CD4-positive, alpha-beta T cell (primary cell): ENCODE measurements at regions of chrX and their contacts with region 1.

Region 1: DNA sequence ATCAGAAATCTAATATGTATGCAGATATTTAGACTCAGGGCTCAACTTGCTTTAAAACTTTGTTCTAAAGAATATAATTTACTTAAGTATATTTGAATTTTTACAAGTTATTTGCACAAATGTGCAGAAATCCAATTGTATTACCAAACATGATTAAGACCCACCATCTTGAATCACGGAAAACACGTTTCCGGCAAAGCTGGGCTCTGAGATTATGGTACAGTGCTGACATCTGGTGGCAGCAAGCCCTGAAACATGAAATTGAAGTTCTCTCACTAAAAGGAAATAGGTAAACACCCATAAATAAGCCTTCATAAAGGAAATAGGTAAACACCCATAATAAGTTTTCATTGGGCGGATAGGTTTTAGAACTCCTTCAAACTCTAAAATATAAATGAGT is 98.3 kb upstream of the MAOA start:
- DNase-seq: peak; percentile 19 to 77 (median 48)
- ATAC-seq: peak; percentile 39
- H3K4me3 ChIP-seq: no peak overlapping the region
- H3K4me3 Mint-ChIP-seq: no peak overlapping the region
- H3K27ac ChIP-seq: no peak overlapping the region
- H3K27ac Mint-ChIP-seq: no peak overlapping the region
- H3K4me1 ChIP-seq: no peaks in the 10 kb centered on the region
- H3K4me1 Mint-ChIP-seq: no peaks in the 10 kb centered on the region
- H3K27me3 ChIP-seq: no peaks in the 10 kb centered on the region
- H3K27me3 Mint-ChIP-seq: no peaks in the 10 kb centered on the region
- CTCF ChIP-seq: peak; percentile 56

Region 2: DNA sequence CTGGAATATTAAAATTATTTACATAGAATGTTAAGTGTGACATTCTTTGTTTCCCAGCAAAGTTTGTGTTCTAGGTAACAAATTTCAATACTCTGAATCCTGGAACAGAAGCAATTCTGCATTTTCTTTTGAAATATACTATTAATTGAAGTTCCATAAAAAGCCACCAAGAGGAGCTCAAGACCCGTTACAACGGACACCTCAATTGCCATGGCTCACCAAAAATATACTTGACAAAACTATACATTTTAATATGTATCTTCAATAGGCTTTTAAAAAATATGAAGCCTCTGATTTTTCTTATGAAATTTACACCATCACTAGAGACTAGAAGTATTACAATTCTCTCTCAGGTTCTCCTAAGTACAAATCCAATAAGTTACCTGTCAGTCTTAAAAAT is 1999.3 kb before region 1 on chrX:
- CTCF ChIA-PET with region 1: no interaction called
- POLR2A ChIA-PET with region 1: no interaction called
- intact Hi-C with region 1: loop called (anchors 5 to 10 kb)
- DNase-seq: peak in 4 of 14 experiments; percentile 7 to 45 (median 38)
- ATAC-seq: no peak
- H3K4me3 ChIP-seq: no peak overlapping the region
- H3K4me3 Mint-ChIP-seq: no peak overlapping the region
- H3K27ac ChIP-seq: no peak overlapping the region
- H3K27ac Mint-ChIP-seq: peak overlapping the region; percentile 83
- H3K4me1 ChIP-seq: peaks cover 22% of the 10 kb centered on the region
- H3K4me1 Mint-ChIP-seq: peaks cover 41% of the 10 kb centered on the region
- H3K27me3 ChIP-seq: no peaks in the 10 kb centered on the region
- H3K27me3 Mint-ChIP-seq: no peaks in the 10 kb centered on the region
- CTCF ChIP-seq: peak; percentile 36

Region 3: GRCh38 chrX:41589634-41590270 is 1968.0 kb before region 1 on chrX:
- CTCF ChIA-PET with region 1: no interaction called
- POLR2A ChIA-PET with region 1: no interaction called
- intact Hi-C with region 1: loop called in 1 of 2 experiments (anchors 10 kb)
- DNase-seq: no peak
- ATAC-seq: no peak
- H3K4me3 ChIP-seq: no peak overlapping the region
- H3K4me3 Mint-ChIP-seq: no peak overlapping the region
- H3K27ac ChIP-seq: no peak overlapping the region
- H3K27ac Mint-ChIP-seq: no peak overlapping the region
- H3K4me1 ChIP-seq: no peaks in the 10 kb centered on the region
- H3K4me1 Mint-ChIP-seq: no peaks in the 10 kb centered on the region
- H3K27me3 ChIP-seq: no peaks in the 10 kb centered on the region
- H3K27me3 Mint-ChIP-seq: no peaks in the 10 kb centered on the region
- CTCF ChIP-seq: no peak

Region 4: DNA sequence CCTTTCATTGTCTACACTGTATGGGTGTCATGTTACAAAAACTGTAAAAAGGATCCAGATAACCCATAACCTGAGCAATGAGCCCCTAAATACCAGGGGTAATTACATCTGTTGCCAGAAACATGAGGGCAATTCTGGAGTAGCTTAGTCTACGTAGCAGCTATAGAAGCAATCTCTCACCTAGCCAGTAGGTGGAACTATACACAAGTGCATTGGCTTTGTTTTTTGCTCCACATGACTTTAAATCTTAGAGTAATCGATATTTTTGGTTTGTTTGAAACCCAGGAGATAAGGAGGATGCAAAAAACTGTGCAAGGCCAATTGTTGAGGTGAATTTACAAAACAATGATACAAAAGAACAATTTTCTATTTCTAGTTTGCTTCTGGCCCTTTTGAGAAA is 1776.3 kb before region 1 on chrX:
- CTCF ChIA-PET with region 1: interaction called, 4 read pairs
- POLR2A ChIA-PET with region 1: no interaction called
- intact Hi-C with region 1: loop called (anchors 1 to 2 kb)
- DNase-seq: peak in 3 of 14 experiments; percentile 40 to 66 (median 61)
- ATAC-seq: peak; percentile 43
- H3K4me3 ChIP-seq: no peak overlapping the region
- H3K4me3 Mint-ChIP-seq: no peak overlapping the region
- H3K27ac ChIP-seq: no peak overlapping the region
- H3K27ac Mint-ChIP-seq: no peak overlapping the region
- H3K4me1 ChIP-seq: no peaks in the 10 kb centered on the region
- H3K4me1 Mint-ChIP-seq: peaks cover 17% of the 10 kb centered on the region
- H3K27me3 ChIP-seq: no peaks in the 10 kb centered on the region
- H3K27me3 Mint-ChIP-seq: no peaks in the 10 kb centered on the region
- CTCF ChIP-seq: peak; percentile 69

Region 5: GRCh38 chrX:41796577-41796976 is 1761.2 kb before region 1 on chrX:
- CTCF ChIA-PET with region 1: interaction called, 3 read pairs
- POLR2A ChIA-PET with region 1: no interaction called
- intact Hi-C with region 1: loop called (anchors 5 kb)
- DNase-seq: peak in 2 of 14 experiments; percentile 15 to 23
- ATAC-seq: no peak
- H3K4me3 ChIP-seq: no peak overlapping the region
- H3K4me3 Mint-ChIP-seq: no peak overlapping the region
- H3K27ac ChIP-seq: no peak overlapping the region
- H3K27ac Mint-ChIP-seq: peak overlapping the region; percentile 13
- H3K4me1 ChIP-seq: peaks cover 18% of the 10 kb centered on the region
- H3K4me1 Mint-ChIP-seq: peaks cover 35% of the 10 kb centered on the region
- H3K27me3 ChIP-seq: no peaks in the 10 kb centered on the region
- H3K27me3 Mint-ChIP-seq: no peaks in the 10 kb centered on the region
- CTCF ChIP-seq: no peak

Region 6: DNA sequence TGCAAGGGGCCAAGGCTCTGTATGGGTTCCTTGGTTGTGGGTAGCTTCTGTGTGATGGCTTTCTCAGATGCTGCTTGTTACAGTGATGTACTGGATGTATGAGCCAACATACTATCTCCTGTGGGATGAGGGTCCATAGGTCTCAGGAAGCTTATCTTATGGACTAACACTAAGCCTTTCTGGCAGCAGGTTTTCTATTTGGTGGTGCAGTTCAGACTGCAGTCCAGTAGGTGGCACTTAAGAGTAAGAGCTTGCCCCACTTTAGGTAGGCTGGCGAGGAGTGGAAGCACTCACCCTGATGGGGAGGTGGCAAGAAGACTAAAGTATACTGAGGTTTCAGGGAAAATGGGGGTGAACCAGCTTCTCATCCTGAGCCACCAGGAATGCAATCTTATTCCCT is 208.4 kb before region 1 on chrX:
- CTCF ChIA-PET with region 1: interaction called, 4 read pairs
- POLR2A ChIA-PET with region 1: no interaction called
- intact Hi-C with region 1: loop called in 1 of 2 experiments (anchors 5 kb)
- DNase-seq: peak in 12 of 14 experiments; percentile 0 to 58 (median 13)
- ATAC-seq: no peak
- H3K4me3 ChIP-seq: no peak overlapping the region
- H3K4me3 Mint-ChIP-seq: no peak overlapping the region
- H3K27ac ChIP-seq: no peak overlapping the region
- H3K27ac Mint-ChIP-seq: no peak overlapping the region
- H3K4me1 ChIP-seq: no peaks in the 10 kb centered on the region
- H3K4me1 Mint-ChIP-seq: peaks cover 14% of the 10 kb centered on the region
- H3K27me3 ChIP-seq: no peaks in the 10 kb centered on the region
- H3K27me3 Mint-ChIP-seq: no peaks in the 10 kb centered on the region
- CTCF ChIP-seq: peak; percentile 43

Region 7: GRCh38 chrX:43750248-43750676 is 192.5 kb after region 1 on chrX:
- CTCF ChIA-PET with region 1: no interaction called
- POLR2A ChIA-PET with region 1: interaction called, 3 read pairs
- intact Hi-C with region 1: loop called (anchors 1 to 2 kb)
- DNase-seq: peak; percentile 1 to 72 (median 19)
- ATAC-seq: peak; percentile 70
- H3K4me3 ChIP-seq: no peak overlapping the region
- H3K4me3 Mint-ChIP-seq: no peak overlapping the region
- H3K27ac ChIP-seq: no peak overlapping the region
- H3K27ac Mint-ChIP-seq: no peak overlapping the region
- H3K4me1 ChIP-seq: no peaks in the 10 kb centered on the region
- H3K4me1 Mint-ChIP-seq: no peaks in the 10 kb centered on the region
- H3K27me3 ChIP-seq: no peaks in the 10 kb centered on the region
- H3K27me3 Mint-ChIP-seq: no peaks in the 10 kb centered on the region
- CTCF ChIP-seq: peak; percentile 63